ENCODE measurements at regions of chr22 and their contacts with region 1.

Region 1: DNA sequence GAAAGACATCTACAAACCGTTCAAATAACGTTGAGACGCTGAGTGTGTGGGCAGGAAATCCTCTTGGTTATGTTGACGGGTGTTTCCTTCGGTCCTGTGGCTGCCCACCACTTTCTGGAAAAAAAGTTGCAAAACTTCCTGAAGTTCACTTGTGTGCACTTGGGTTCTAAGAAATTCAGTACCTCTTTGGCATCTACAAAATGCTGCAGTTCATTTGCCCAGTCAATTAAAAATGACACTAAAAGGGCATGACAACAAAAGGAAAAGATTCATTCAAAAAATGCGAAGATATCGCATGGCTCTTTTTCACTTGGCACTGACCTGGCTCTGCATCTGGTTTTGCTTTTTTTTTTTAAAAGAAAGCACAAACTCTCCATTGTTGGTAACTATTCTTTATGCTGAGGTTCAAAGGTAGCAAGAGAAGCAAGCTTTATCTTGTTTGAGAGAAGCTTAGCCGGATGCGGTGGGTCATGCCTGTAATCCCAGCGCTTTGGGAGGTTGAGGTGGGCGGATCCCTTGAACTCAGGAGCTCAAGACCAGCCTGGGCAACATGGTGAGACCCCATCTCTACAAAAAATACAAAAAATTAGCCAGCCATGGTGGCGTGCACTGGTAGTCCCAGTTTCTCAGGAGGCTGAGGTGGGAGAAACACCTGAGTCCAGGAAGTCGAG is 10.6 kb upstream of the XBP1 start:
- DNase-seq: peak; percentile 16 to 68 (median 62)
- H3K4me3 ChIP-seq: peak overlapping the region; percentile 13
- H3K4me3 Mint-ChIP-seq: peak overlapping the region; percentile 74 to 89 (median 88)
- H3K27ac ChIP-seq: peak overlapping the region; percentile 3
- H3K27ac Mint-ChIP-seq: peak overlapping the region; percentile 73 to 97 (median 92)
- H3K4me1 ChIP-seq: peaks cover 74% of the 10 kb centered on the region
- H3K4me1 Mint-ChIP-seq: peaks cover 68 to 86% (median 81%) of the 10 kb centered on the region in 3 donors
- H3K27me3 ChIP-seq: no peaks in the 10 kb centered on the region
- H3K27me3 Mint-ChIP-seq: no peaks in the 10 kb centered on the region

Region 2: GRCh38 chr22:28600546-28601143 is 210.3 kb before region 1 on chr22:
- CTCF ChIA-PET with region 1: interaction called, 11 read pairs
- POLR2A ChIA-PET with region 1: no interaction called
- DNase-seq: peak in 2 of 5 donors; percentile 46 to 56
- H3K4me3 ChIP-seq: no peak overlapping the region
- H3K4me3 Mint-ChIP-seq: no peak overlapping the region
- H3K27ac ChIP-seq: no peak overlapping the region
- H3K27ac Mint-ChIP-seq: no peak overlapping the region
- H3K4me1 ChIP-seq: no peaks in the 10 kb centered on the region
- H3K4me1 Mint-ChIP-seq: no peaks in the 10 kb centered on the region
- H3K27me3 ChIP-seq: peaks cover 16% of the 10 kb centered on the region
- H3K27me3 Mint-ChIP-seq: peaks cover 10 to 40% of the 10 kb centered on the region in 2 donors

Region 3: DNA sequence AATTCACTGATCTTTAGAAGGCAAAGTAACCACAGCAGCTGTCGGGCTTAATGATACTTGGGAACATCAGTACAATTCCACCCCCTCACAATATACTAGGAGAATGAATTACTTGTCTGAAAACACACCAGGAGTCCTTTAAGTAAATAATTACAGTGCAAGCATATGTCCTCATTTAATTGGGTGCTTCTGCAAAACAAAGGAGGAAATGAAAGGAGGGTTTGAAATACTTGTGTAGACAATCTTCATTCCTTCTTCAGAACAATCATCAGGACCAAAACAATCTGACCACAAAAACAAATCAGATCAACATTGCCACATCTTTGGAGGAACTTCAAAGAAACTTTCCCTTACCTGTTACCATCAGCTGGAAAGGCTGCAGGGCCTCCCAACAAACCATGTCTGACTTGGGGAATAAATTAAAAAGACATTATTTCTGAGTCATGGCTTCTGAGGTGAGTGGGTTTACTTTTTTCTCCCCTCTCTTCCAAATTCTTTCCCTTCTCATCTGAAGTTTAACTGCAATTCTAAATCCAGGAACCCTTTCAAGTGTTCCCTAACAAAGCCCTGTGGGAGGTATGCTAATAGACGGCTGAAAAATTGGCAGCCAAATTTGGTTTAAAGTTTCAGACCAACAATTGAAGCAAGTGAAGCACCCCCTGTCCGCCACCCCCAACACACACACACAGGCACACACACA is 50.9 kb before region 1 on chr22:
- CTCF ChIA-PET with region 1: no interaction called
- POLR2A ChIA-PET with region 1: no interaction called
- DNase-seq: no peak
- H3K4me3 ChIP-seq: no peak overlapping the region
- H3K4me3 Mint-ChIP-seq: no peak overlapping the region
- H3K27ac ChIP-seq: no peak overlapping the region
- H3K27ac Mint-ChIP-seq: peak overlapping the region in 1 of 8 donors; percentile 26
- H3K4me1 ChIP-seq: no peaks in the 10 kb centered on the region
- H3K4me1 Mint-ChIP-seq: no peaks in the 10 kb centered on the region
- H3K27me3 ChIP-seq: no peaks in the 10 kb centered on the region
- H3K27me3 Mint-ChIP-seq: peaks cover 0 to 3% of the 10 kb centered on the region in 2 donors